ENCODE measurements at regions of chr18 and their contacts with region 1.

Region 1: GRCh38 chr18:54558609-54559585 is 32.1 kb upstream of the DYNAP start:
- DNase-seq: no peak
- ATAC-seq: no peak
- H3K4me3 Mint-ChIP-seq: no peak overlapping the region
- H3K27ac Mint-ChIP-seq: no peak overlapping the region
- H3K4me1 Mint-ChIP-seq: no peaks in the 10 kb centered on the region
- H3K27me3 Mint-ChIP-seq: no peaks in the 10 kb centered on the region

Region 2: GRCh38 chr18:54392543-54393023 is 166.3 kb before region 1 on chr18:
- CTCF ChIA-PET with region 1: no interaction called
- POLR2A ChIA-PET with region 1: no interaction called
- intact Hi-C with region 1: loop called in 1 of 2 experiments (anchors 5 kb)
- DNase-seq: no peak
- ATAC-seq: peak; percentile 59
- H3K4me3 Mint-ChIP-seq: no peak overlapping the region
- H3K27ac Mint-ChIP-seq: no peak overlapping the region
- H3K4me1 Mint-ChIP-seq: peaks cover 6% of the 10 kb centered on the region
- H3K27me3 Mint-ChIP-seq: peaks cover 6% of the 10 kb centered on the region

Region 3: DNA sequence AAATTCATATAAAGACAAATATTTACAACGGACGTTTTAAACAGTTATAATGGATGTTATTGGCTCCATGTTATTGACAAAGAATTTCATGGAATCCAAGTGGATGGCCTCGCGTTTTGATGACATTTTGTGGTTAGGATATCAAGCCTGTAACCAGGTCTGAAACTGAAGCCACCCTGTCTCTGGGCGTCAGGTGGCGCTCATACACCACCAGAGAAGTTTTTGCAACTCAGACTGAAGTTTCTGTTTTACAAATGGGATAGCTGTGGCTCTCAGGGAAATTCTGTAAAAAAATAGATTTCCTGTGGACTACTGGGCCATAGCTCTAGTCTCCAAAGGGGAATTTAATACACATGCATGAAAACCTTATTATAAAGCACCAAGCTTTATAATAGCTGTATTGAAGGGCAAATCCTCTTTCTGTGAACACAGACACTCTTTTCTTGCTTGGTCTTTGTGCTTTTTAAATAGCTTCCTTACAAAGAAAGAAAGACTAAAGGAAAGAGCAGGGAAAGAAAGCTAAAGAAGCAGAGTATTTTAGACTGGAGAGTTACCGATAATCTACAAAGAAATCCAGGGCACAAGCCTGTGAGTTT is 114.5 kb before region 1 on chr18:
- CTCF ChIA-PET with region 1: interaction called, 6 read pairs
- POLR2A ChIA-PET with region 1: no interaction called
- intact Hi-C with region 1: loop called in 1 of 2 experiments (anchors 5 kb)
- DNase-seq: peak; percentile 71
- ATAC-seq: peak; percentile 68
- H3K4me3 Mint-ChIP-seq: no peak overlapping the region
- H3K27ac Mint-ChIP-seq: no peak overlapping the region
- H3K4me1 Mint-ChIP-seq: no peaks in the 10 kb centered on the region
- H3K27me3 Mint-ChIP-seq: peaks cover 10% of the 10 kb centered on the region

Region 4: DNA sequence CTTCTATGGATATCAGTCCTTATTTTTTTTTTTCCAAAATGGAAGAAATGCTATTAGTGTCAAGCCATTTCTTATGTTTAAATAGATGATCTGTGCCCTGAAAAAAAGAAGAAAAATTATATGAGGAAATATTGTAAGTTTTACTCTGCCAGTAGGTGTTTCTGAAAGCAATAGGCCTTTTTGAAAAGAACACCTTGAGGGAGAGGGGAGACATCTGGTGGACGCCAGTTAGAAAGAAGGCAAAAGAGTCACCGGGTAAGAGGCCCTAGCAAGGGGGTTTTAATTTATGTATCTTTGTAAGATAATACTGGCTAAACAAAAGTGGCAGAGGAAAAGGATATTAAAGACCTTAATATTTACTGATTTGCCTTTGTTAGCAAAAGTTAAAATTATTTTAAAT is 88.3 kb after region 1 on chr18:
- CTCF ChIA-PET with region 1: interaction called, 3 read pairs
- POLR2A ChIA-PET with region 1: no interaction called
- intact Hi-C with region 1: loop called in 1 of 2 experiments (anchors 1 kb)
- DNase-seq: peak; percentile 21
- ATAC-seq: no peak
- H3K4me3 Mint-ChIP-seq: no peak overlapping the region
- H3K27ac Mint-ChIP-seq: no peak overlapping the region
- H3K4me1 Mint-ChIP-seq: no peaks in the 10 kb centered on the region
- H3K27me3 Mint-ChIP-seq: peaks cover 6% of the 10 kb centered on the region

Region 5: DNA sequence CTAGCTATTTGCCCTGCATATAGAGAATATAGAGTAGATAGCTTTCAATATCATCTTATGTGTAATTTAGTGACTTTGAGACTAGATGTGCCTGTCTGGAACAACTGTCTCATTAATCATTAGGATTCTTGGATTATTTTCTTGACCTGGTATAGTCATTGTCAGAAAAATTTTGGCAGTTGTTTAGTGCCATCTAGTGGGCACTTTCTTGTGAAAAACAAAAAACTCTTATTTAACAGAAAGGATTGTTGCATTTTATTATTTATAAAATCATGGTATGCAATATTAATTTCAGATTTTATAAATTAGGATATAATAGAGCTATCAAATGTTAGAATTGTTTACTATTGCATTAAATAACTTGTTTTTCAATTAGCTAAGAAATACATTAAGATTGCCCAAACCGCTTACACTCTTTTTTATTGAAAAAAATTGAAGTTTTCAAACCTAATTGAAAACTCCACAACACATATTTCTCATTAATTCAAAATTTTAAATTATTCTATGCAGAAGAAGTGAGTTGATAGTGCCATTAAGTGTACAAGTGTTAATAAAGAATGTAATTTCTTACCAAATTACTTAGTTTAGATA is 112.5 kb after region 1 on chr18:
- CTCF ChIA-PET with region 1: interaction called, 31 read pairs
- POLR2A ChIA-PET with region 1: no interaction called
- intact Hi-C with region 1: loop called (anchors 1 kb)
- DNase-seq: no peak
- ATAC-seq: no peak
- H3K4me3 Mint-ChIP-seq: no peak overlapping the region
- H3K27ac Mint-ChIP-seq: no peak overlapping the region
- H3K4me1 Mint-ChIP-seq: no peaks in the 10 kb centered on the region
- H3K27me3 Mint-ChIP-seq: peaks cover 3% of the 10 kb centered on the region

Region 6: DNA sequence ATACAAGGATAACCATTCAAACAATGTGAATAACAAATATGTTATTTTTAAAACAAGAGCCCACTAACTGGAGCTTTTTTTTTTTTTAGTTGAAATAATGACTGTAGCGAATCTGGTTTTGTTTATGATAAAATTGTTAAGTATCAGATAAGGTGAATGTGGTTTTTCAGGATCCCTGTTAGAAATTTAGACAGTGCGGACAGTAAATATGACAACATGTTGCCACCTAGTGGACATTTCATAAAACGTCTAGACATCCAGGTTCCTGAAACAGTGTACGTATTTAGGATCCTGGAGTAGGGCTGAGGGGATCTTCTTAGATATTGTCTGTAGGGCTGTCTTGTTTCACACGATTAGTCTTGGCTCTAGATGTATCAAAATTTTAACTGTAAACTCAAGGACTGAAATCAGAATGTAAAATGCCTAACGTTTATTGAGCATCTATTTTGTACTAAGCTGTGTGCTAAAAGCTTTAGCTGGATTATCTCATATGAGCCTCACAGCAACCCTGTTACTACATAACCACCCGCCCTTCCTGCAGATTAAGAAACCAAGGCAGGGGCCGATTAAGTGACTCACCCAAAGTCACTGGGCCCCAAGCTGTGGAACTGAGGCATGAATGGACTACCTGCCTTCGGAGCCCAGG is 424.3 kb after region 1 on chr18:
- CTCF ChIA-PET with region 1: interaction called, 3 read pairs
- POLR2A ChIA-PET with region 1: no interaction called
- intact Hi-C with region 1: loop called (anchors 1 to 5 kb)
- DNase-seq: no peak
- ATAC-seq: peak; percentile 66
- H3K4me3 Mint-ChIP-seq: no peak overlapping the region
- H3K27ac Mint-ChIP-seq: no peak overlapping the region
- H3K4me1 Mint-ChIP-seq: no peaks in the 10 kb centered on the region
- H3K27me3 Mint-ChIP-seq: peaks cover 2% of the 10 kb centered on the region